CD8-positive, alpha-beta T cell (primary cell): ENCODE measurements at regions of chr12 and their contacts with region 1.

Region 1: GRCh38 chr12:76455582-76456345 is 103.8 kb downstream of the OSBPL8 start:
- DNase-seq: peak in 3 of 9 experiments; percentile 16 to 62 (median 50)
- ATAC-seq: peak; percentile 40
- H3K4me3 ChIP-seq: no peak overlapping the region
- H3K4me3 Mint-ChIP-seq: no peak overlapping the region
- H3K27ac ChIP-seq: no peak overlapping the region
- H3K27ac Mint-ChIP-seq: no peak overlapping the region
- H3K4me1 ChIP-seq: peaks cover 5% of the 10 kb centered on the region
- H3K4me1 Mint-ChIP-seq: peaks cover 39% of the 10 kb centered on the region
- H3K27me3 ChIP-seq: no peaks in the 10 kb centered on the region
- H3K27me3 Mint-ChIP-seq: no peaks in the 10 kb centered on the region
- CTCF ChIP-seq: peak; percentile 57

Region 2: GRCh38 chr12:75526655-75527511 is 928.9 kb before region 1 on chr12:
- CTCF ChIA-PET with region 1: interaction called, 9 read pairs
- POLR2A ChIA-PET with region 1: no interaction called
- intact Hi-C with region 1: loop called in 1 of 2 experiments (anchors 5 kb)
- DNase-seq: peak in 2 of 9 experiments; percentile 45 to 60
- ATAC-seq: no peak
- H3K4me3 ChIP-seq: no peak overlapping the region
- H3K4me3 Mint-ChIP-seq: no peak overlapping the region
- H3K27ac ChIP-seq: no peak overlapping the region
- H3K27ac Mint-ChIP-seq: no peak overlapping the region
- H3K4me1 ChIP-seq: no peaks in the 10 kb centered on the region
- H3K4me1 Mint-ChIP-seq: peaks cover 1% of the 10 kb centered on the region
- H3K27me3 ChIP-seq: peaks cover 0 to 4% of the 10 kb centered on the region in 2 experiments
- H3K27me3 Mint-ChIP-seq: peaks cover 17% of the 10 kb centered on the region
- CTCF ChIP-seq: peak; percentile 60

Region 3: DNA sequence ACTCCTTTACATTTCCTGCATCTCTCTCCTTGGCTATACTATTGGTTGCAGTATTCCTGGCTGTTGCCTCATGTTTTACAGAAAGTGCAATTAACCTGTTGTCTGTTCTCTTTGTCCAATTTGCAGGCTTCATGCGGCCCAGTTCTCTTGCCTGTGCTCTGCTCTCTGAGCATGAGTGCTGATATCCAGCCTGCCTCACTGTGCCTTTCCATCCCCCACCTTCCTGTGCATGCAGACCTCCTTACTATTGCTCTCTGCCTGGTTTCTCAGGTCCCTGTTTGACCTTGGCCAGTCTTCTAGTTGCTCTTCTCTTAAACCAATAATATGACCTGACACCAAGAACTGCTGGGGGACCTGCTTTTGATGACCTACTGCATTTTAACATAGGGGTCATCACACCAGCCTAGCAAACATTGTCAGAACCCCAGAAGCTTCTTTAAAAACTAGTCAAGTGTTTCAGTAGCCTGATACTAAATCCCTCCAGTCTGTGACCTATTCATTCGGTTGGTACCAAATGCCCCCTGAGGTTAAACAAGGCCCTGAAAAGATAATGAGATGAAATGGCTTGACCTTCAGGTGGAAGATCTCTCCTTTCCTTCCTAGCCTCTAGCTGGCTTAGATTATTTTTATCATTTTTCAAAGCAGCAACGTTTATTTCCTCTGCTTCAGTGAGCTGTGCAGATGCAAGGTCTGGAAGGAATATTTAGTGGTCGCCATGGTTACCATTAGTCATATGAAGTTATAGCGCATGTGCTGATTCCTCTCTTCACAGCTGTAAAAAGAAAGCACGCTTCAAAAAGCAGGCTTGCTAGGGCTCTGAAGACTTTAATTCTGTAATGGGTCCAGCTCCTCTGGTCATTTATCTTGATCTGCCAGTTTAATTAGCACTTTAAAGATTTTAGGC is 640.7 kb before region 1 on chr12:
- CTCF ChIA-PET with region 1: no interaction called
- POLR2A ChIA-PET with region 1: no interaction called
- intact Hi-C with region 1: loop called in 1 of 2 experiments (anchors 5 kb)
- DNase-seq: peak in 2 of 9 experiments; percentile 50 to 59
- ATAC-seq: peak; percentile 46
- H3K4me3 ChIP-seq: no peak overlapping the region
- H3K4me3 Mint-ChIP-seq: no peak overlapping the region
- H3K27ac ChIP-seq: no peak overlapping the region
- H3K27ac Mint-ChIP-seq: no peak overlapping the region
- H3K4me1 ChIP-seq: no peaks in the 10 kb centered on the region
- H3K4me1 Mint-ChIP-seq: peaks cover 4% of the 10 kb centered on the region
- H3K27me3 ChIP-seq: no peaks in the 10 kb centered on the region
- H3K27me3 Mint-ChIP-seq: peaks cover 3% of the 10 kb centered on the region
- CTCF ChIP-seq: no peak

Region 4: GRCh38 chr12:76348079-76348901 is 107.5 kb before region 1 on chr12 and contains the start of gene BBS10:
- CTCF ChIA-PET with region 1: interaction called, 4 read pairs
- POLR2A ChIA-PET with region 1: no interaction called
- intact Hi-C with region 1: loop called in 1 of 2 experiments (anchors 10 kb)
- DNase-seq: peak; percentile 71 to 92 (median 88)
- ATAC-seq: peak; percentile 96
- H3K4me3 ChIP-seq: peak within 1 kb of the TSS; percentile 76 to 78
- H3K4me3 Mint-ChIP-seq: peak within 1 kb of the TSS; percentile 96
- H3K27ac ChIP-seq: peak within 1 kb of the TSS; percentile 56 to 81
- H3K27ac Mint-ChIP-seq: peak within 1 kb of the TSS; percentile 93
- H3K4me1 ChIP-seq: peaks cover 14% of the 10 kb centered on the region
- H3K4me1 Mint-ChIP-seq: peaks cover 29% of the 10 kb centered on the region
- H3K27me3 ChIP-seq: no peaks in the 10 kb centered on the region
- H3K27me3 Mint-ChIP-seq: no peaks in the 10 kb centered on the region
- CTCF ChIP-seq: peak; percentile 11
- total RNA-seq, gene BBS10: 1.4 to 1.5 TPM

Region 5: DNA sequence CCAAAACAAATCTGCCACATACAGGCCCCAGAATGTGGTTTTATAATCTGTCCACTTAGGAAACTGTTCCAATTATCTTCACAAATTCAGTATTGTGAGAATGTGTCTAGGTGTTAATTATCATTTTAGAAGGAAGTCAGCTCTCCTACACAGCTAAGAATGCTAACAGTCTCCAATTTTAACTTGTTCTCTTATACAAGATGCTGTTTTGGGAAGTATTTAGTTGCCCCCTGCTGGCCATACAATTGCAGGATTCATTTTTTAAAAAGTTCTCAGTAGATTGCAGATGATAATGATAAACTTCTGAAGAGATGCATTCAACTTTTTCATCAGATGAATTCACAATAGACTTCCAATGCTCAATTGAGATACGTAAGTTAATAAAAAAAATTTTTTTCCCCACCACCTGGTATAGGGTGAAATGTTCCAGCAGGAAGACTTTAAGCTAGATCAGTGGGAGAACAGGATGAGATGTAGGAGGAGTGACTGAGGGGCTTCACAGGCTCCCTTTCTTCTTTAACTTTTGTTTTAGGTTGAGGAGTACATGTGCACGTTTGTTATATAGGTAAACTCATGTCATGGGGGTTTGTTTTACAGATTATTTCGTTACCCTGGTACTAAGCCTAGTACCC is 131.1 kb after region 1 on chr12:
- CTCF ChIA-PET with region 1: interaction called, 9 read pairs
- POLR2A ChIA-PET with region 1: no interaction called
- intact Hi-C with region 1: loop called in 1 of 2 experiments (anchors 5 kb)
- DNase-seq: peak in 8 of 9 experiments; percentile 2 to 74 (median 44)
- ATAC-seq: peak; percentile 68
- H3K4me3 ChIP-seq: no peak overlapping the region
- H3K4me3 Mint-ChIP-seq: no peak overlapping the region
- H3K27ac ChIP-seq: no peak overlapping the region
- H3K27ac Mint-ChIP-seq: no peak overlapping the region
- H3K4me1 ChIP-seq: no peaks in the 10 kb centered on the region
- H3K4me1 Mint-ChIP-seq: peaks cover 2% of the 10 kb centered on the region
- H3K27me3 ChIP-seq: no peaks in the 10 kb centered on the region
- H3K27me3 Mint-ChIP-seq: no peaks in the 10 kb centered on the region
- CTCF ChIP-seq: peak; percentile 93

Region 6: GRCh38 chr12:76763743-76764675 is 308.2 kb after region 1 on chr12 and contains the start of gene ZDHHC17:
- CTCF ChIA-PET with region 1: no interaction called
- POLR2A ChIA-PET with region 1: no interaction called
- intact Hi-C with region 1: loop called in 1 of 2 experiments (anchors 10 kb)
- DNase-seq: peak; percentile 89 to 96 (median 93)
- ATAC-seq: peak; percentile 82
- H3K4me3 ChIP-seq: peak within 1 kb of the TSS; percentile 73 to 99
- H3K4me3 Mint-ChIP-seq: peak within 1 kb of the TSS; percentile 98
- H3K27ac ChIP-seq: peak within 1 kb of the TSS; percentile 87 to 94
- H3K27ac Mint-ChIP-seq: peak within 1 kb of the TSS; percentile 99
- H3K4me1 ChIP-seq: peaks cover 26% of the 10 kb centered on the region
- H3K4me1 Mint-ChIP-seq: peaks cover 47% of the 10 kb centered on the region
- H3K27me3 ChIP-seq: no peaks in the 10 kb centered on the region
- H3K27me3 Mint-ChIP-seq: no peaks in the 10 kb centered on the region
- CTCF ChIP-seq: no peak
- total RNA-seq, gene ZDHHC17: 38.1 to 40.3 TPM